ENCODE measurements at regions of chr4 and their contacts with region 1.

Region 1: GRCh38 chr4:39977489-39978377 is at the start of gene PDS5A:
- DNase-seq: peak; percentile 93 to 96 (median 94)
- ATAC-seq: peak; percentile 89
- H3K4me3 ChIP-seq: peak within 1 kb of the TSS; percentile 92
- H3K27ac ChIP-seq: peak within 1 kb of the TSS; percentile 83
- H3K4me1 ChIP-seq: peaks cover 10 to 16% of the 10 kb centered on the region in 2 experiments; a peak in 4 of 5 replicates
- H3K27me3 ChIP-seq: no peaks in the 10 kb centered on the region
- CTCF ChIP-seq: peak; percentile 89 to 99 (median 98)
- EP300 ChIP-seq: 0 out of 2 replicates have a peak, but pooled peaks have one; percentile 17
- POLR2A ChIP-seq: peak; percentile 68
- RAD21 ChIP-seq: peak; percentile 60 to 65
- polyA plus RNA-seq, gene PDS5A: 16.4 to 20.6 TPM

Region 2: GRCh38 chr4:39527273-39528060 is 450.3 kb before region 1 on chr4 and contains the start of gene UGDH:
- CTCF ChIA-PET with region 1: no interaction called
- POLR2A ChIA-PET with region 1: no interaction called
- in situ Hi-C with region 1: no loop called
- intact Hi-C with region 1: loop called (anchors 1 kb)
- DNase-seq: peak; percentile 97
- ATAC-seq: peak; percentile 99
- H3K4me3 ChIP-seq: peak within 1 kb of the TSS; percentile 81
- H3K27ac ChIP-seq: peak within 1 kb of the TSS; percentile 83
- H3K4me1 ChIP-seq: peaks cover 5 to 20% of the 10 kb centered on the region in 2 experiments; a peak in 4 of 5 replicates
- H3K27me3 ChIP-seq: no peaks in the 10 kb centered on the region
- CTCF ChIP-seq: peak in 1 of 3 experiments; percentile 8; a peak in 1 of 6 replicates
- EP300 ChIP-seq: peak; percentile 23; the same call in 1 of the 2 replicates
- POLR2A ChIP-seq: peak; percentile 93
- RAD21 ChIP-seq: no peak; a peak in 2 of 4 replicates
- polyA plus RNA-seq, gene UGDH: 5.5 to 6.8 TPM

Region 3: DNA sequence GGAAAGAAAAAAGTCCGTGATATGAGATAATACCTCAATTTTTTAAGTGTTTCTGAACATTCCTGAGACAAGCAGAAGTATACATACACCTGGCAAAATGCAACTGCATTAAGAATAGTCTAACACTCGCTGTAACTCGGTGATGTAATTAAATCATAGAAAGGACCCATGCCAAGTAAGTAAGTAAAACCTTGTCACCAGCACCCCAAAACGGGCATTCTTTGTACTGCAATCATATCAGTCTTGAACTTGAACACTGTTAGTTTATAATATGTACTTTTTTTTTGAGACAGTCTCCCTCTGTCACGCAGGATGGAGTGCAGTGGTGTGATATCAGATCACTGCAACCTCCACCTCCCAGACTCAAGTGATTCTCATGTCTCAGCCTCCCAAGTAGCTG is 386.4 kb before region 1 on chr4:
- CTCF ChIA-PET with region 1: no interaction called
- POLR2A ChIA-PET with region 1: interaction called, 4 read pairs
- in situ Hi-C with region 1: no loop called
- intact Hi-C with region 1: loop called (anchors 2 kb)
- DNase-seq: peak in 2 of 4 experiments; percentile 14 to 30
- ATAC-seq: peak; percentile 72
- H3K4me3 ChIP-seq: no peak overlapping the region
- H3K27ac ChIP-seq: no peak overlapping the region
- H3K4me1 ChIP-seq: no peaks in the 10 kb centered on the region
- H3K27me3 ChIP-seq: no peaks in the 10 kb centered on the region
- CTCF ChIP-seq: peak; percentile 43 to 57 (median 44); a peak in 4 of 6 replicates
- EP300 ChIP-seq: no peak
- POLR2A ChIP-seq: no peak
- RAD21 ChIP-seq: peak in 1 of 2 experiments; percentile 54; a peak in 2 of 4 replicates

Region 4: DNA sequence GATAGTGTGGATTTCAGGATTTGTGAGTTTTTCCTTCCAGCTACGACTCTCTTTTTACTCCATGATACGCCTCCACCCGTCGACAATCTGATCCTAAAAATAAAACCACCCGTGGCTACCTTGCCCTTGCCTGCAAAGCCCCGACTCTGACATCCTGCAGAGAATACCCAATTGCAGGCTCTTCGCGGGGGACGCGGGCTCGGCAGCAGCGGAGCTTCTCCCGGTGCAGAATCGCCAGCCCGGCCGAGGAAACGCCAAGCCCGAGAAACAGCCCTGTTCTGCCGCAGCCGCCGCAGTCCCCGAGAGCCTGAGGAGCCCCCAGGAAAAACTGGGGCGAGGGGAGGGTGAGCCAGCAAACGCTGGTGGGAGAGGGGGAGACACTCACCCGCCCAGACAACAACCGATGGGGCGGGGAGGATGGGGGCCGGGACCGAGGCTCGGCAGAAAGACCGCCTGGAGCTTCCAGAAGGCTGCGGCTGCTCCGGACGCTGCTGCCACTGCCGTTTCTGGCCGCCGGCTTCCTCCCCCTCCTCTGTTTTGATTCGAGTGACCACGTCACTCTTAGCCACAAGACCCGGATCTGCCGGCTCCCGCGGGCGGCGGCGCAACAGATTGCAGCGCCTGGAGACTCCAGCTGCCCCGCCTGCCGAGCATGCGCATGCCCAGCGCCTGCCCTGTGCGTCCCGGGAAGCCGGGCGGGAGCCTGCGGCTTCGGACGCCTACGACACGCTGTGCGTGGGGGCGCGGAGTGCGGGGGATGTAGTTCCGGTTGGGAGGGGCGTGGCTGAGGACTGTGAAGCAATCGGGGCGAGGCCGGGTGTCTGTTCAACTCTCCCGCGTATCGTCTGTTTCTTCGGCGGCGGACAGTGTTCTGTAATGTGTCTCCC is 339.1 kb before region 1 on chr4 and contains the start of gene SMIM14:
- CTCF ChIA-PET with region 1: no interaction called
- POLR2A ChIA-PET with region 1: no interaction called
- in situ Hi-C with region 1: no loop called
- intact Hi-C with region 1: loop called (anchors 2 kb)
- DNase-seq: peak; percentile 97 to 98 (median 98)
- ATAC-seq: peak; percentile 95
- H3K4me3 ChIP-seq: peak within 1 kb of the TSS; percentile 90
- H3K27ac ChIP-seq: peak within 1 kb of the TSS; percentile 93
- H3K4me1 ChIP-seq: peaks cover 5 to 8% of the 10 kb centered on the region in 2 experiments; a peak in 3 of 5 replicates
- H3K27me3 ChIP-seq: no peaks in the 10 kb centered on the region
- CTCF ChIP-seq: peak in 1 of 3 experiments; percentile 14; a peak in 1 of 6 replicates
- EP300 ChIP-seq: peak; percentile 80
- POLR2A ChIP-seq: peak; percentile 88
- RAD21 ChIP-seq: no peak
- polyA plus RNA-seq, gene SMIM14: 3.0 to 3.7 TPM

Region 5: GRCh38 chr4:39697740-39698423 is 279.9 kb before region 1 on chr4 and contains the start of gene UBE2K:
- CTCF ChIA-PET with region 1: interaction called, 3 read pairs
- POLR2A ChIA-PET with region 1: no interaction called
- in situ Hi-C with region 1: no loop called
- intact Hi-C with region 1: loop called (anchors 1 kb)
- DNase-seq: peak; percentile 93 to 95 (median 94)
- ATAC-seq: peak; percentile 95
- H3K4me3 ChIP-seq: peak within 1 kb of the TSS; percentile 82
- H3K27ac ChIP-seq: peak within 1 kb of the TSS; percentile 96
- H3K4me1 ChIP-seq: peaks cover 4 to 13% of the 10 kb centered on the region in 2 experiments; a peak in 3 of 5 replicates
- H3K27me3 ChIP-seq: no peaks in the 10 kb centered on the region
- CTCF ChIP-seq: peak in 1 of 3 experiments; percentile 8; a peak in 1 of 6 replicates
- EP300 ChIP-seq: no peak
- POLR2A ChIP-seq: peak; percentile 97
- RAD21 ChIP-seq: no peak
- polyA plus RNA-seq, gene UBE2K: 48.4 to 62.6 TPM

Region 6: GRCh38 chr4:39808231-39808749 is 169.4 kb before region 1 on chr4:
- CTCF ChIA-PET with region 1: no interaction called
- POLR2A ChIA-PET with region 1: no interaction called
- in situ Hi-C with region 1: no loop called
- intact Hi-C with region 1: loop called (anchors 1 kb)
- DNase-seq: peak in 1 of 4 experiments; percentile 27
- ATAC-seq: peak; percentile 85
- H3K4me3 ChIP-seq: no peak overlapping the region
- H3K27ac ChIP-seq: no peak overlapping the region
- H3K4me1 ChIP-seq: no peaks in the 10 kb centered on the region; a peak in 1 of 5 replicates
- H3K27me3 ChIP-seq: no peaks in the 10 kb centered on the region
- CTCF ChIP-seq: peak; percentile 14 to 47 (median 18); a peak in 3 of 6 replicates
- EP300 ChIP-seq: no peak
- POLR2A ChIP-seq: no peak
- RAD21 ChIP-seq: peak in 1 of 2 experiments; percentile 55; a peak in 2 of 4 replicates

Region 7: GRCh38 chr4:40140196-40140595 is 162.5 kb after region 1 on chr4:
- CTCF ChIA-PET with region 1: no interaction called
- POLR2A ChIA-PET with region 1: no interaction called
- in situ Hi-C with region 1: no loop called
- intact Hi-C with region 1: no loop called
- DNase-seq: peak in 2 of 4 experiments; percentile 33 to 41
- ATAC-seq: peak; percentile 59
- H3K4me3 ChIP-seq: no peak overlapping the region
- H3K27ac ChIP-seq: no peak overlapping the region; the same call in 2 of the 3 replicates
- H3K4me1 ChIP-seq: peaks cover 0 to 5% of the 10 kb centered on the region in 2 experiments; a peak in 2 of 5 replicates
- H3K27me3 ChIP-seq: no peaks in the 10 kb centered on the region
- CTCF ChIP-seq: no peak
- EP300 ChIP-seq: no peak; the same call in 1 of the 2 replicates
- POLR2A ChIP-seq: no peak
- RAD21 ChIP-seq: no peak

Region 8: DNA sequence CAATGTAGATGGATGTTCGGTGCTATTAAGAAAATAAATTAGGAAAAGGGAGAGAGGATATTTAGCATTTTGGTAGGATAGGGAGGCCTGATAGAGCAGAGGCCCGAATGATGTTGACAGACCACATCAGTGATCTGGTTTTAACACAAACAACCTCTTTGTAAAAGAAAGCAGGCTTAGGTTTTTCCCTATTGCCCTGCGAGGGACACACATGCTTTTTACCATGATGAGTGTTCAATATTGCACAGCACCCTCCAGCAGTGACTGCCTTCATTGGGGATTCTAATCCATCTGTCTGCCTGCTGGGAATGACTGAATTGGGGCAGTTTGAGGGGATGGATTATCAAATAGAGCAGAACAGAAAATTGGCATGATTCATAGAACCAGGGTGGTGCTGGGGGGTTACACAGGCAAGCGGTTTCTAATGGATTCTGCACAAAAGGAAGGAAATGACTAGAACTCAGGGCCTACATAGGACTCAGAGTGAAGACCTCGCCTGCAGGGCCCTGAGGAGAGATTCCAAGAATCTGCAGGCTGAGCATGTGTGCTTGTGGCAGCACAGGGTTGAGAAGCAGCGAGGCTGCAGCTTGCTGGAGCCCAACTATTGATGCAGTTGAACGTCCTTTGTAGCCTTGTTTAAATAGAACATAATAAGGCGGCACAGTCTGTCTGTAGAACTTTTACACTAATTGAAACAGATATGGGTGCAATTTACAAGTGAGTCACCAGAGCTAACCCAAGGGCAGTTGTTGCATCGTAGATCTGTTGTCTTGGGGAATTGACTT is 277.1 kb after region 1 on chr4:
- CTCF ChIA-PET with region 1: no interaction called
- POLR2A ChIA-PET with region 1: no interaction called
- in situ Hi-C with region 1: no loop called
- intact Hi-C with region 1: no loop called
- DNase-seq: no peak
- ATAC-seq: no peak; the same call in 2 of the 3 replicates
- H3K4me3 ChIP-seq: no peak overlapping the region
- H3K27ac ChIP-seq: no peak overlapping the region
- H3K4me1 ChIP-seq: no peaks in the 10 kb centered on the region; a peak in 1 of 5 replicates
- H3K27me3 ChIP-seq: no peaks in the 10 kb centered on the region
- CTCF ChIP-seq: no peak
- EP300 ChIP-seq: no peak
- POLR2A ChIP-seq: no peak
- RAD21 ChIP-seq: no peak

Region 9: DNA sequence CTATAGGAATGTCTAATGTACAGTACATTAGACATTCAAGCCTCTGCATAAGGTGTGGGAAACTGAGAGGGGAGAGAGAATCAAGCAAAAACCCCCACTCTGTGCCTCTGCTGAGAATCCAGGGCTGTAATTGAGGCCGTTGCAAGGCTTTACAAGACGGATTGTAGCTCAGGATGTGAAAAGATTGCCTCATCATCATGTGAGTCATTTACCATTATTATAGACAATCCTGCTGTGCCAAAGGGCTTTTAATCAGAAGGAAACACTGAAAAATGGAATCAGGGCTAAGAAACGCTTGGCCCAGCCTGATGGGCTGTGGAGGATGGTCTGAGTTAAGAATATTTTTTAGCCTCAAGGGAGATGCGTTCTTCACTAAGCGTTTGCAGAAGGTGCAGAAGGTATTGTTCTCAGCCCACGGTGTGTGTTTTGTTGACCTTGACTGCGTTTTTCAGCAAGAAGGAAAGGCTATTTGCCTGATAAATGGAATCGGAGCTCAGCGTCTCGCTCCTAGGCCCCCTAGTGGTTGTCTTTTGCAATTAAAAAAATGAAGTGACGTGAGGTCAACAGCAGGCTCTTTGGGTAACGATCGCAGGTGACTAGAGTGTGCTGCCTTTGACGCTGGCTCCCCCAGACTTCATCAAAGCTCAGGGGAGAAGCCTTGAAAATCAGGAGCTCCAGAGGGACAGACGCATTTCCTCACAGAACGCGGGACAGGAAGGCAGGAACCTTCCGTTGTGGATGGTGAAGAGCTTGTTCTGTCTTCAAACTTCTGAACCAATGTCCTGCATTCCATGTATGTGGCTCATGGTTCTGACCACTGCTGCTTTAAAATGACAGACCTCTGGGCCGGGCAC is 339.3 kb after region 1 on chr4:
- CTCF ChIA-PET with region 1: no interaction called
- POLR2A ChIA-PET with region 1: no interaction called
- in situ Hi-C with region 1: no loop called
- intact Hi-C with region 1: loop called (anchors 5 kb)
- DNase-seq: peak; percentile 63 to 87 (median 68)
- ATAC-seq: peak; percentile 85
- H3K4me3 ChIP-seq: no peak overlapping the region
- H3K27ac ChIP-seq: peak overlapping the region; percentile 61
- H3K4me1 ChIP-seq: peaks cover 12 to 37% of the 10 kb centered on the region in 2 experiments
- H3K27me3 ChIP-seq: no peaks in the 10 kb centered on the region
- CTCF ChIP-seq: peak; percentile 74 to 90 (median 80)
- EP300 ChIP-seq: peak; percentile 22; the same call in 1 of the 2 replicates
- POLR2A ChIP-seq: no peak
- RAD21 ChIP-seq: peak; percentile 51 to 65

Region 10: GRCh38 chr4:41160012-41160789 is 1182.5 kb after region 1 on chr4:
- CTCF ChIA-PET with region 1: no interaction called
- POLR2A ChIA-PET with region 1: no interaction called
- in situ Hi-C with region 1: no loop called
- intact Hi-C with region 1: no loop called
- DNase-seq: no peak
- ATAC-seq: no peak
- H3K4me3 ChIP-seq: no peak overlapping the region
- H3K27ac ChIP-seq: no peak overlapping the region
- H3K4me1 ChIP-seq: no peaks in the 10 kb centered on the region
- H3K27me3 ChIP-seq: peaks cover 0 to 6% of the 10 kb centered on the region in 2 experiments; a peak in 3 of 5 replicates
- CTCF ChIP-seq: no peak
- EP300 ChIP-seq: no peak
- POLR2A ChIP-seq: no peak
- RAD21 ChIP-seq: no peak